Adrenal gland (tissue), 19 donors: ENCODE measurements at regions of chr2 and their contacts with region 1.

Region 1: GRCh38 chr2:38274286-38275276 is 102.5 kb downstream of the ATL2 start:
- DNase-seq: peak; percentile 24 to 68 (median 54)
- H3K4me3 ChIP-seq: no peak overlapping the region
- H3K27ac ChIP-seq: no peak overlapping the region
- H3K4me1 ChIP-seq: no peaks in the 10 kb centered on the region
- H3K27me3 ChIP-seq: no peaks in the 10 kb centered on the region
- CTCF ChIP-seq: peak; percentile 53 to 95 (median 88)
- POLR2A ChIP-seq: no peak

Region 2: GRCh38 chr2:36918307-36918706 is 1356.3 kb before region 1 on chr2:
- intact Hi-C with region 1: no loop called
- DNase-seq: no peak
- H3K4me3 ChIP-seq: no peak overlapping the region
- H3K27ac ChIP-seq: no peak overlapping the region
- H3K4me1 ChIP-seq: peaks cover 0 to 21% of the 10 kb centered on the region in 2 donors
- H3K27me3 ChIP-seq: no peaks in the 10 kb centered on the region
- CTCF ChIP-seq: peak in 3 of 6 experiments; percentile 16 to 47 (median 37)
- POLR2A ChIP-seq: no peak

Region 3: DNA sequence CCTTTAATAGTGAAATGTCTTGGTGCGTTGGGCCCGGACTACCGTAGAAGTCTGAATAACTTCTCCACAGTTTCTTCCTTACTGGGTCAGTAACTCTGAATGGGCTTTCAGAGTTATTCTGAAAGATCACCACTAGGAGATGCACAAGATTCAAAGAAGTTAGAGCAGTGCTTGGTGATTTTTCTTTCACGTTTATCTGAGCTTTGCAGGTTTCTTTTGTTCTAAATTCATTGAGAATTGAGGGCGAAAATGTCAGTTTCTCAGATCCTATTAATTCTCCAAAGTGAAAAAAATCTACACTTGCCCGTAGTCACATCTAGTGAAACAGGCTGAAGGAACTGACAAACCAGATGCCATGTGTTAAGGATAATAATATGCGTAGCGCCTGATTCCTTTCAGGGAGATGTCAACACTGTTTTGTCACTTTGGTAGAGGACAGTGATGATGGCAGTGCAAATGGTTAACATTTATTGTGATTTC is 860.1 kb before region 1 on chr2:
- intact Hi-C with region 1: loop called in 1 of 2 experiments (anchors 10 kb)
- DNase-seq: peak in 1 of 7 donors; percentile 9
- H3K4me3 ChIP-seq: no peak overlapping the region
- H3K27ac ChIP-seq: no peak overlapping the region
- H3K4me1 ChIP-seq: peaks cover 0 to 6% of the 10 kb centered on the region in 2 donors
- H3K27me3 ChIP-seq: no peaks in the 10 kb centered on the region
- CTCF ChIP-seq: peak; percentile 77 to 98 (median 93)
- POLR2A ChIP-seq: no peak

Region 4: DNA sequence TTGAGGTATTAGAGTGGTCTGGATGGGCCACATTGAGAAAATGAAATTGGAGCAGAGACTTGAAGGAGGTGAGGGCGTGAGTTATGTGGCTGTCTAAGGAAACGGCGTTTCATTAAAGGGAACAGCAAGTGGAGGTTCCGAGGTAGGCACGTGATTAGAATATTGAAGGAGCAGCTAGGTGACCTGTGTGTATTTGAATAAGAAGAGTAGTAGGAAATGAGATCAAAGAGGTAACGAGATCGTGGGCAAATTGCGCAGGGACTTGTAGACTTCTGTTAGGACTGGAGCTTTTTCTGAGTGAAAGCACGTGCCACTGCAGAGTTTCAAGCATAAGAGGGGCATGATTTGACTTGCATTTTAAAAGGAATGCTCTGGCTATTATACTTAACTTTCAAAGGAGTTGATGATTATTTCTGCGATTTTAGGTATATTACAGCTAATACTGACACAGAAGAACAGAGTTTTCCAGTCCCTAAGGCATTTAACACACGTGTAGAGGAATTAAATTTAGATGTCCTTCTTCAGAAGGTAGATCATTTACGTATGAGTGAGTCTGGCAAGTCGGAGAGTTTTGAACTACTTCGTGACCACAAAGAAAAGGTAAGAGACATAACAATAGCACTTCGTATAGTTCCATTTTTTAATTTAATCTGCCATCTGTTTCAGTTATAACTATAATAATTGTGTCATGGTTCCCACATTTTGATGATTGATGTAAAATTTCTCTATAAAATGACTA is 300.8 kb before region 1 on chr2:
- intact Hi-C with region 1: loop called in 1 of 2 experiments (anchors 10 kb)
- DNase-seq: no peak
- H3K4me3 ChIP-seq: no peak overlapping the region
- H3K27ac ChIP-seq: no peak overlapping the region
- H3K4me1 ChIP-seq: peaks cover 0 to 5% of the 10 kb centered on the region in 2 donors
- H3K27me3 ChIP-seq: no peaks in the 10 kb centered on the region
- CTCF ChIP-seq: no peak
- POLR2A ChIP-seq: no peak

Region 5: DNA sequence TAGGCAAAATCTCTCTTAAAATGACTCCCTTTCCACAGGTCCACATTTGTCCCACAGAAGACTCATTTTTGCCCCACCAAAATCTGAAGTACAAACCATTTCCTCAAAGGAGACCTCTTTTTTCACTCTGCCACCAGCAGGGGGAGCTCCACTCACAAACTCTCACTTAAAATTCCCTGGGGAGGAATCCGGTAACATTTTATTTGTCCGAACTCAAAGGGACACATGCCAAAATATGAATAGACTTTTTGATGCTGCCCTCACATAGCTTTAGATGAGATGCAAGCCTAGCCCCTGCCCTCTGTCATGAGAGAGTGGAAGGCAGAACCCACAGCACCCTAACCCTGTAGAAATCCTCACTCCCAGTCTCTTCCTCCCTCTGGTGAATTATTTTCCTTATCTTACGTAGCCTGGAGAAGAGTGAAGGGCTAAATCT is 292.4 kb before region 1 on chr2:
- intact Hi-C with region 1: loop called (anchors 5 to 10 kb)
- DNase-seq: peak; percentile 60 to 87 (median 69)
- H3K4me3 ChIP-seq: no peak overlapping the region
- H3K27ac ChIP-seq: no peak overlapping the region
- H3K4me1 ChIP-seq: peaks cover 3 to 6% of the 10 kb centered on the region in 2 donors
- H3K27me3 ChIP-seq: no peaks in the 10 kb centered on the region
- CTCF ChIP-seq: peak; percentile 61 to 86 (median 79)
- POLR2A ChIP-seq: no peak

Region 6: GRCh38 chr2:38076606-38077430 is 197.8 kb before region 1 on chr2:
- intact Hi-C with region 1: loop called (anchors 10 kb)
- DNase-seq: peak; percentile 81 to 90 (median 84)
- H3K4me3 ChIP-seq: peak overlapping the region in 3 of 4 donors; percentile 40 to 75 (median 46)
- H3K27ac ChIP-seq: peak overlapping the region; percentile 50 to 92 (median 84)
- H3K4me1 ChIP-seq: peaks cover 0 to 19% of the 10 kb centered on the region in 2 donors
- H3K27me3 ChIP-seq: peaks cover 5% of the 10 kb centered on the region
- CTCF ChIP-seq: peak in 4 of 6 experiments; percentile 2 to 73 (median 20)
- POLR2A ChIP-seq: peak; percentile 14 to 54